Activated CD4-positive, alpha-beta memory T cell treated with anti-CD3 and anti-CD28 coated beads for 36 hours (primary cell): ENCODE measurements at regions of chr5 and their contacts with region 1.

Region 1: GRCh38 chr5:56649569-56649968 is 165.8 kb upstream of the MAP3K1 start:
- DNase-seq: no peak
- H3K4me3 Mint-ChIP-seq: no peak overlapping the region
- H3K27ac Mint-ChIP-seq: no peak overlapping the region
- H3K4me1 Mint-ChIP-seq: peaks cover 30% of the 10 kb centered on the region
- H3K27me3 Mint-ChIP-seq: no peaks in the 10 kb centered on the region

Region 2: DNA sequence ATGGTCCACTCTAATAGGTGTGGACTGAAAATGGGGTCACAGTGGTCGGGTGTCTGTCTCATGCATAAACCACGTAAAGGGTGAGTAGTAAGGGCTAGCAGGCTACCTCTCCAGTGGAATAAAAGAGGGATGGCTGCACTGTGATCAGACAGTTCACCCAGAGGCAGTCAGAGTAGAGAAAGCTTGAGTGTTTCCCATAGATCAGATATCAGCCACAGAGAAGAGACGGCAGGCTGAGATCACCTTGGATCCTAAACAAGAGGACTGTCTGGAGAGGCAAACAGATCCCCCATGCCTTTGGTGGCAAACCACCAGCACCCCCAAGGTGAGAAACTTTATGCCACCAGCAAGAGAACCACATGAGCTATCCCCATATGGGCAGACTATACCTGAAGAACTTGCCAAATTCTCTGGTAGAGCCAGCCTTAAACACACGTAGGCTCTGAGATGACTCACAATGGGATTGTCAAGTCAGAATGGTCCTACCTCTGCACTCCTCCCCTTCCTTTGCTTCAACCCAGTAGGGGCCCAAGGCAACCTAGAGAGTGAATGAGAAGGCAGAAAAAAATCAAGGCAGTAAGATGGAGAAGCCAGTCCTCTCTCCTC is 39.4 kb before region 1 on chr5:
- CTCF ChIA-PET with region 1: no interaction called
- POLR2A ChIA-PET with region 1: no interaction called
- intact Hi-C with region 1: loop called (anchors 5 kb)
- DNase-seq: peak; percentile 73
- H3K4me3 Mint-ChIP-seq: peak overlapping the region; percentile 8
- H3K27ac Mint-ChIP-seq: peak overlapping the region; percentile 85
- H3K4me1 Mint-ChIP-seq: peaks cover 69% of the 10 kb centered on the region
- H3K27me3 Mint-ChIP-seq: no peaks in the 10 kb centered on the region